HEK293T (cell line): ENCODE measurements at regions of chr19 and their contacts with region 1.

Region 1: DNA sequence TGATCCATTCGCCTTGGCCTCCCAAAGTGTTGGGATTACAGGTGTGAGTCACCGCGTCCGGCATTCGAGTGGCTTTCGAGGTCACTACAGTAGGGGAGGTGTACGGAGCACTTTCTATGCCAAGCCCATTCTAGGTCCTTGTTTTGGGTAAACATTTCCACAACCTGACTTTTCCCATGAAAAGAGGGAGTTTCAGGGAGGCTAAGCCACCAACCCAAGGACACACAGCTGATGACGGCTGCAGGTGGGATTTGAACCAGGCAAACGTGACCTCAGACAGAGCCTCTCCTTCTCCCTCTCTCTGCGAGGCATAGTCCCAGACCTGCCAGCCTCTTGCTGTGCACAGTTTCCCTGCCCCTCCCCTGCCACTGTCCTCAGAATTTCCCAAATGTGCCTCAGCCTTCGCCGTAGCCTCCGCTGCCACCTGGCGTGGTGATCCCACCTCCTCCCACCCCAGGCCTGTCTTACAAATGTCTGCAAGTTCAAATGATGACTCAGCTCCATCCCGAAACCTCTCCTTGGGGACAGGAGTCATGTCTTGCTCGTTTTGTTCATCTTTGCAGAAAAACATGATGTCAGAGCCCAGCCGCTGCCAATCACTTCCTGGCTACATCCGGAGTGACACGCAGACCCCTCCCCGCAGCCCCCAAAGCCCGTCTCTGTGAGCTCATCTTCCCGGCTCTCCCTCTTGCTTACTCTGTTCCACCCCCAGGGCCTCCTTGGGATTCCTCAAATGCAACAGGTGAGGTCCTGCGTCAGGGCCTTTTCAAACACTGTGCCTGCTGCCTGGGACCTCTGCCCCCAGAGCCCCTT is 6.6 kb upstream of the GADD45B start:
- DNase-seq: no peak

Region 2: DNA sequence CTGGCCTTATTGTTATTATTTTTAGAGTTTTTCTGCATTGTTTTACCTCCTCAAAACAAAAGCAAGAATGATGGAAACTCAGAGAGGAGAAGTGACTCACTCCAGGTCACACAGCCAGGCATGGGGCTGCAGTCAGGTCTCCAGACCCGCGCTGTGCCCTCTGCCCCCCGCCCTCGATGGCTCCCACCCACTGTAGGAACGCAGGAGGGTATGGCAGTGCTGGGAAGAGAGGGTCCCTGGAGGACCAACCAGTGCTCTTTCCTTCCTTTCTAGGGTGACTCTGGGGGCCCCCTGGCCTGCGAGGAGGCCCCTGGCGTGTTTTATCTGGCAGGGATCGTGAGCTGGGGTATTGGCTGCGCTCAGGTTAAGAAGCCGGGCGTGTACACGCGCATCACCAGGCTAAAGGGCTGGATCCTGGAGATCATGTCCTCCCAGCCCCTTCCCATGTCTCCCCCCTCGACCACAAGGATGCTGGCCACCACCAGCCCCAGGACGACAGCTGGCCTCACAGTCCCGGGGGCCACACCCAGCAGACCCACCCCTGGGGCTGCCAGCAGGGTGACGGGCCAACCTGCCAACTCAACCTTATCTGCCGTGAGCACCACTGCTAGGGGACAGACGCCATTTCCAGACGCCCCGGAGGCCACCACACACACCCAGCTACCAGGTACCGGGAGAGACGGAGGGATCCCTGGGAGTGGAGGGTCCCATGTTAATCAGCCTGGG is 47.6 kb before region 1 on chr19:
- CTCF ChIA-PET with region 1: no interaction called
- POLR2A ChIA-PET with region 1: no interaction called
- DNase-seq: no peak

Region 3: DNA sequence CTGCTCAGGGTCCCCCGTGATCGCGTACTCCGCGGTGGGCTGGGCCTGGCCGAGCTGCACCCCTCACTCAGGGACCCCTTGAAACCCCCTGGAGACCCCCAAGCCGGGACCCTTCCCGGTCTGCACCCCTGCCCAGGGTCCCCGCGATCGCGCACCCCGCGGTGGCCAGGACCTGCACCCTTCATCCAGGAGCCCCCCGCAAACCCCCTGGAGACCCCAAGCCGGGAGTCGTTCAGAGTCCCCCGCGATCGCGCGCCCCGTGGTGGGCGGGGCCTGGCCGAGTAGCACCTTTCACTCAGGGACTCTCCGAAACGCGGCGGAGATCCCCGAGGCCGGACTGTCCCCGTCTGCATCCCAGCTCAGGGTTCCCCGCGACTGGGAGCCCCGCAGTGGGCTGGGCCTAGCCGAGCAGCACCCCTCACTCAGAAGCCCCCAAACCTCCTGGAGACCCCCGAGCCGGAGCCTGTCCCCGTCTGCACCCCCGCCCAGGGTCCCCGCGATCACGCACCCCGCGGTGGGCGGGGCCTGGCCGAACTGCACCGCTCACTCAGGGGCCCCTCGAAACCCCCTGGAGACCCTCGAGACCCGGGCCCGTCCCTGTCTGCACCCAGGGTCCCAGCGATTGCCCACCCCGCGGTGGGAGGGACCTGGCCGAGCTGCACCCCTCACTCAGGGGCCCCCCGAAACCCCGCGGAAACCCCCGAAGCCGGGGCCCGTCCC is 13.3 kb before region 1 on chr19:
- CTCF ChIA-PET with region 1: no interaction called
- POLR2A ChIA-PET with region 1: interaction called, 12 read pairs
- DNase-seq: peak; percentile 48

Region 4: GRCh38 chr19:2494444-2495129 is 25.3 kb after region 1 on chr19:
- CTCF ChIA-PET with region 1: no interaction called
- POLR2A ChIA-PET with region 1: no interaction called
- DNase-seq: no peak